Activated naive CD4-positive, alpha-beta T cell treated with anti-CD3 and anti-CD28 coated beads for 36 hours (primary cell): ENCODE measurements at regions of chr1 and their contacts with region 1.

Region 1: DNA sequence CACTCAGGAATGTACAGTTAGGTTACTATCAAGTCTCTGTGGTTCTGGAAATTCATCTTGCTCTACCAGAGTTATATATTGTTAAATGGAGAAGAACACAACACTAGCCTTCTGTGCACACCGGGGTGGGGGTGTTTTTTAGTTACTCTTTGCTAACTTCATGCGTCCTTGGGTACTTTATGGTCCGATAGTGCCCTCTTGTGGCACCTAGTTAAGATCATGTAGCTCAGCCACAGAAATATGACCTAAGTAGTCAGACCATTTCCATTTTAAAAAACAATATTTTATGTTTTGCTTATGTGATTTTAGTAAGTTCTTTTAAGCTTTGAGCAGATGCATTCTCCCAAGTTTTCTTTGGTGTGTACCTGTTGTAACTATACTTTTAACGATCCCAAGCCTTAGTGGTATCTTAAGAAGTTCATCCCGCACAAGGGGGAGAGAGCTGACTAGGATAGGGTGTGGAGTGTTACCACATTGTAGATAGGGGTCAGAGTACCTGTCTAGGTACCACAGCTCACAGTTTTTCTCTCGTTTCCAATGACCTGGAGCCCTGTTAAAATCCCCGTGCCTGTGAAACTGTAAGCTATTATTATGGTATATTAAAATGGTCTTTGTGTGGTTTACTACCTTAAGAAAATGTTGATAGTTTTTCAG is 20.6 kb upstream of the SH3D21 start:
- DNase-seq: peak; percentile 79
- H3K4me3 Mint-ChIP-seq: no peak overlapping the region
- H3K27ac Mint-ChIP-seq: peak overlapping the region; percentile 73
- H3K4me1 Mint-ChIP-seq: peaks cover 33% of the 10 kb centered on the region
- H3K27me3 Mint-ChIP-seq: no peaks in the 10 kb centered on the region

Region 2: DNA sequence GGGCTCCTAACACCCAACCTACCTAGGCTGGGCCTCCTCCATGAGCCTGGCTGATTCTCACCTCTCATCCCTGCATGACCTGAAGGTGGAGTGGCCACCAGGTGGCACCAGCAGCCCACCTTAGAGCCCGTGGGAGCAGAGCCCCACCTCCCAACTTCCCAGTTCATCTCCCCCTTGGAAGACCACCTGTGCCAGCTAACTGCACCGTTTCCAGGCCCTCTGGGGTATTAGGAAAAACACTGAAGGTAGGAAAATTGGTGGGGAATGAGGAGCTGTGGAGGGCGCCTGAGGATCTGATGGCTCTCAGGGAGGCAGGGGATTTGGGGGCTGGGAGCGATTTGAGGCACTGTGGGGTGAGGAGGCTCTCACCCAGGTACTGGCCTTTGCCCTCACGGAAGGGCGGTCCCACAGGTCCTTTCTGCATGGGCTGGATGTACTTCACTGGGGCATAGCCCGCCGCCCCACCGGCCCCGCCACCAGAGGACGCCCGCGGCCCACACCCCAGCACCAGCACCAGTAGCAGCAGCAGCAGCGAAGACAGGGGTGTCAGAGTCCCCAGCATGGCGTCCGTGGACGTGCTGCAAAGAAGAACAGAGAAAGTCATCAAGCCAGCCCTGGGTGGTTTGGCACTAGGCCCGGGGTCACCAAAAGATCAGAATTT is 185.8 kb before region 1 on chr1:
- CTCF ChIA-PET with region 1: interaction called, 3 read pairs
- intact Hi-C with region 1: loop called (anchors 1 kb)
- DNase-seq: peak; percentile 85
- H3K4me3 Mint-ChIP-seq: no peak overlapping the region
- H3K27ac Mint-ChIP-seq: no peak overlapping the region
- H3K4me1 Mint-ChIP-seq: peaks cover 4% of the 10 kb centered on the region
- H3K27me3 Mint-ChIP-seq: no peaks in the 10 kb centered on the region

Region 3: GRCh38 chr1:36187800-36188593 is 97.6 kb before region 1 on chr1:
- CTCF ChIA-PET with region 1: interaction called, 26 read pairs
- intact Hi-C with region 1: loop called (anchors 1 kb)
- DNase-seq: peak; percentile 92
- H3K4me3 Mint-ChIP-seq: no peak overlapping the region
- H3K27ac Mint-ChIP-seq: peak overlapping the region; percentile 41
- H3K4me1 Mint-ChIP-seq: peaks cover 4% of the 10 kb centered on the region
- H3K27me3 Mint-ChIP-seq: no peaks in the 10 kb centered on the region

Region 4: DNA sequence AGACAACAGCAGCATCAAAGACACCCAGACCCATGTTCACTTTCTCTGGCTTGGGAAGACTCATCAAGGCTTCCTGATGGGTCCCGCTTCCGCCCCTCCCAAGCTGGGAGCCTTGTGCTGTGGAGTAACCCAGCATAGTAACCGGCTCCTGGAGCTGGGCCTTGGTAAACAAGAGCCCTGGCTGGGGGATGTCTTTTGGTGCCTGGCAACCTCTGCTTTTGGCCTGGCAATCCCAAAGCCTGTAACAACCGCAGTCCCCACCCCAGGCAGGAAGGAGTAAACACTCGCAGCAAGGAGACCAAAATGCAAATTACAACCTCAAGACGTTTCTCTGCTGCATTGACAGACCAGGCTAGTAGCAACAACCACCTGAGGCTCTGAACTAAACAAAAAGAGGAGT is 78.2 kb before region 1 on chr1:
- CTCF ChIA-PET with region 1: no interaction called
- intact Hi-C with region 1: loop called (anchors 5 kb)
- DNase-seq: no peak
- H3K4me3 Mint-ChIP-seq: no peak overlapping the region
- H3K27ac Mint-ChIP-seq: no peak overlapping the region
- H3K4me1 Mint-ChIP-seq: peaks cover 15% of the 10 kb centered on the region
- H3K27me3 Mint-ChIP-seq: no peaks in the 10 kb centered on the region

Region 5: GRCh38 chr1:36253161-36253862 is 32.3 kb before region 1 on chr1:
- CTCF ChIA-PET with region 1: interaction called, 13 read pairs
- intact Hi-C with region 1: no loop called
- DNase-seq: no peak
- H3K4me3 Mint-ChIP-seq: no peak overlapping the region
- H3K27ac Mint-ChIP-seq: peak overlapping the region; percentile 26
- H3K4me1 Mint-ChIP-seq: peaks cover 62% of the 10 kb centered on the region
- H3K27me3 Mint-ChIP-seq: no peaks in the 10 kb centered on the region

Region 6: GRCh38 chr1:36300526-36300925 is 15.0 kb after region 1 on chr1:
- CTCF ChIA-PET with region 1: interaction called, 15 read pairs
- intact Hi-C with region 1: no loop called
- DNase-seq: peak; percentile 39
- H3K4me3 Mint-ChIP-seq: no peak overlapping the region
- H3K27ac Mint-ChIP-seq: peak overlapping the region; percentile 77
- H3K4me1 Mint-ChIP-seq: peaks cover 64% of the 10 kb centered on the region
- H3K27me3 Mint-ChIP-seq: no peaks in the 10 kb centered on the region

Region 7: GRCh38 chr1:36420836-36421664 is 135.5 kb after region 1 on chr1:
- CTCF ChIA-PET with region 1: interaction called, 6 read pairs
- intact Hi-C with region 1: loop called (anchors 2 kb)
- DNase-seq: peak; percentile 97
- H3K4me3 Mint-ChIP-seq: peak overlapping the region; percentile 45
- H3K27ac Mint-ChIP-seq: peak overlapping the region; percentile 93
- H3K4me1 Mint-ChIP-seq: peaks cover 20% of the 10 kb centered on the region
- H3K27me3 Mint-ChIP-seq: no peaks in the 10 kb centered on the region

Region 8: DNA sequence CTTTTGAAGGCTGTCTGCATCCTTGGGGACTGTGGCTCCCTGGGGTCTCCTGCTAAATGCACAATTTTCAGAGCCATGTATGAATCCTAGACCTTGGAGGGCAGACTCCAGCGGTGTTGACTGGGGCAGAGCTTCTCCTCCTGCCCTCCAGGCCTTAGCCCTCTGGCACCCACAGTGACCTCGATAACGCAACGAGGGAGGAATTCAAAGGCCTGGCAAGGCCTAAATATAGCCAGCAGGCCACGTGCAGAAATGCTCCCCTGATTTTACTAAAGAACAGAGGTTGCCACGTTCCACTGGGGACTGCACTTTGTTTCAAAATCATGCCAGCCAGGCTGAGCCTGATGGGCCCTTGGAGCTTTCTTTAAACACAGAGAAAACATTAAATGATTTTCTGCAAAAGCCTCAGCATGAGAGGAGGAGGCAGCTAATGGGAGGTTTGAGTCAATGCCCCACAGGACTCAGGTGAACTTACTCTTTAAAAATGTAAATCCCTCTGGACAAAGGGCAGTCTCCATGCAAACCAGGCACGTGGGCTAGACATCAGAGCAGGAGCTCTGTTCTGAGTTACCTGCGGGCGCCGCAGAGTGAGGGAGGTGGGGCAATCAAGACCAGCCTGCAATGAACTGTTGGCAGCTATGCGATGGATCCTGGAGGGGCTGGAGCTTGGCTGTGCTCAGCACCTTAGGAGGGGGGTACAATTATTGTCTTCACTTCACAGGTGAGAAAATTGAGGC is 720.7 kb after region 1 on chr1:
- CTCF ChIA-PET with region 1: no interaction called
- intact Hi-C with region 1: no loop called
- DNase-seq: no peak
- H3K4me3 Mint-ChIP-seq: no peak overlapping the region
- H3K27ac Mint-ChIP-seq: no peak overlapping the region
- H3K4me1 Mint-ChIP-seq: no peaks in the 10 kb centered on the region
- H3K27me3 Mint-ChIP-seq: peaks cover 3% of the 10 kb centered on the region